ENCODE measurements at regions of chr11 and their contacts with region 1.

Region 1: GRCh38 chr11:118198370-118198769 is 21.9 kb upstream of the SCN2B start:
- DNase-seq: peak; percentile 79
- H3K4me3 Mint-ChIP-seq: no peak overlapping the region
- H3K27ac Mint-ChIP-seq: no peak overlapping the region
- H3K4me1 Mint-ChIP-seq: peaks cover 15% of the 10 kb centered on the region
- H3K27me3 Mint-ChIP-seq: no peaks in the 10 kb centered on the region
- CTCF ChIP-seq: peak; percentile 78

Region 2: GRCh38 chr11:118051611-118052461 is 146.5 kb before region 1 on chr11:
- CTCF ChIA-PET with region 1: no interaction called
- intact Hi-C with region 1: no loop called
- DNase-seq: no peak
- H3K4me3 Mint-ChIP-seq: no peak overlapping the region
- H3K27ac Mint-ChIP-seq: no peak overlapping the region
- H3K4me1 Mint-ChIP-seq: no peaks in the 10 kb centered on the region
- H3K27me3 Mint-ChIP-seq: peaks cover 21% of the 10 kb centered on the region
- CTCF ChIP-seq: no peak

Region 3: GRCh38 chr11:118184784-118185579 is 13.4 kb before region 1 on chr11:
- CTCF ChIA-PET with region 1: no interaction called
- intact Hi-C with region 1: no loop called
- DNase-seq: no peak
- H3K4me3 Mint-ChIP-seq: no peak overlapping the region
- H3K27ac Mint-ChIP-seq: no peak overlapping the region
- H3K4me1 Mint-ChIP-seq: no peaks in the 10 kb centered on the region
- H3K27me3 Mint-ChIP-seq: peaks cover 39% of the 10 kb centered on the region
- CTCF ChIP-seq: no peak

Region 4: DNA sequence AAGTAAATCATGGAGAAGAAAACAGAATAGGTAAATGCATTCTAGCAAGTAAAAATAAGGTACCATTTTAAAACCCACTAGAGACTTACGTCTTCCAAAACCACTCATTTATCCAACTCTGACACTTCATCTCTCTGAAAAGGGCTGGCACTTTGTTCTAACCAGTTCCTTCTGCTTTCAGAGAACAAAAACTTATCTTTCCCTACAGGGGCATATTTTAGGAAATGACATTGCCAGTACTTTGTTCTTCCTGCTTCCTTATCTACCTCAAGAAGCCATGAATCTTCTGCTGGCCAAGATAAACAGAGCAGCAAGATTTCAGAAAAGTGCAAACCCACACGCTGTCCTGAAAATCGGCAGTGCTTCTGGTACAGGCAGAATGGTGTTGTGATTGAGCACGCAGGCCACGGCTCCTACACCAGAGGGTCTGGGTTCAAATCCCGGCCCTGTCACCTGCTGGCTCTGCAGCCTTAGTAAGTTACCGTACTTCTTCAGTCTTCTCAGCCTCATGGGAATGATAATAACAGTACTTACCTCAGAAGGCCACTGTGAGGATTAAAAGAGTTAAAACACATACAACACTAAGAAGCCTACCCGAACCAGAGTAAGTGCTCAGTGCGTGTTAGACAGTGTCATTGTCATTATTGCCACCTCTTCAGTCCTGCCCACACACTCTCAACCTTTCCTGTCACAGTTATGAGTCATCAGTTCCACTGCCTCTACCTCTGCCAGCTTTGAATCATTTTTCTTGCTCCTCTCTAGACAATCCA is 42.8 kb after region 1 on chr11:
- CTCF ChIA-PET with region 1: interaction called, 5 read pairs
- intact Hi-C with region 1: loop called (anchors 2 kb)
- DNase-seq: peak; percentile 46
- H3K4me3 Mint-ChIP-seq: peak overlapping the region; percentile 51
- H3K27ac Mint-ChIP-seq: peak overlapping the region; percentile 91
- H3K4me1 Mint-ChIP-seq: peaks cover 57% of the 10 kb centered on the region
- H3K27me3 Mint-ChIP-seq: no peaks in the 10 kb centered on the region
- CTCF ChIP-seq: no peak

Region 5: GRCh38 chr11:118353084-118353710 is 154.8 kb after region 1 on chr11:
- CTCF ChIA-PET with region 1: interaction called, 5 read pairs
- intact Hi-C with region 1: loop called (anchors 5 kb)
- DNase-seq: no peak
- H3K4me3 Mint-ChIP-seq: no peak overlapping the region
- H3K27ac Mint-ChIP-seq: no peak overlapping the region
- H3K4me1 Mint-ChIP-seq: peaks cover 7% of the 10 kb centered on the region
- H3K27me3 Mint-ChIP-seq: peaks cover 49% of the 10 kb centered on the region
- CTCF ChIP-seq: no peak

Measured in Calu3 (cell line).